Common myeloid progenitor, CD34-positive (primary cell): ENCODE measurements at regions of chr6 and their contacts with region 1.

Region 1: DNA sequence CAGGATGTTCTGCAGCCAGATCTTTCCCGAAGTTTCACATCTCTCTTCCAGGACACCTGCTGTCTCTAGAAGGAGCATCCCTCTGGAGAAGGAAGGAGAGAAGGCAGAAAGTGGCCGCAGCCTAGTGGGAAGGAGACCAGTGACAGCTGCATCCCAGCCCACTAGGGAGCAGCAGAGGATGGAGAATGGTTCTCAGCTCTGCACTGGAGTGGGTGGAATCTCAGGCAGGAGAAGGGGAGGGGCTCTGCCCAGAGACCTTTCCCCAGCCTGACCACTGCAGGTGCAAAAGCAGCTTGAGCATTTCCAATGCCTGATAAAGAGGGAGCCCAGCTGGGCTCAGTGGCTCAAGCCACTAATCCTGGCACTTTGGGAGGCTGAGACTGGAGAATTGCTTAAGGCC is 32.3 kb downstream of the NCR2 start:
- DNase-seq: peak; percentile 48 to 58 (median 56)
- H3K4me3 ChIP-seq: no peak overlapping the region
- H3K27ac ChIP-seq: no peak overlapping the region
- H3K4me1 ChIP-seq: peaks cover 0 to 20% (median 17%) of the 10 kb centered on the region in 4 experiments
- H3K27me3 ChIP-seq: peaks cover 9 to 70% (median 24%) of the 10 kb centered on the region in 5 experiments

Region 2: GRCh38 chr6:41344876-41345275 is 22.8 kb before region 1 on chr6:
- CTCF ChIA-PET with region 1: interaction called, 10 read pairs
- POLR2A ChIA-PET with region 1: no interaction called
- DNase-seq: peak in 2 of 3 donors; percentile 61 to 73
- H3K4me3 ChIP-seq: no peak overlapping the region
- H3K27ac ChIP-seq: no peak overlapping the region
- H3K4me1 ChIP-seq: peaks cover 0 to 13% (median 5%) of the 10 kb centered on the region in 4 experiments
- H3K27me3 ChIP-seq: peaks cover 0 to 3% (median 0%) of the 10 kb centered on the region in 5 experiments

Region 3: DNA sequence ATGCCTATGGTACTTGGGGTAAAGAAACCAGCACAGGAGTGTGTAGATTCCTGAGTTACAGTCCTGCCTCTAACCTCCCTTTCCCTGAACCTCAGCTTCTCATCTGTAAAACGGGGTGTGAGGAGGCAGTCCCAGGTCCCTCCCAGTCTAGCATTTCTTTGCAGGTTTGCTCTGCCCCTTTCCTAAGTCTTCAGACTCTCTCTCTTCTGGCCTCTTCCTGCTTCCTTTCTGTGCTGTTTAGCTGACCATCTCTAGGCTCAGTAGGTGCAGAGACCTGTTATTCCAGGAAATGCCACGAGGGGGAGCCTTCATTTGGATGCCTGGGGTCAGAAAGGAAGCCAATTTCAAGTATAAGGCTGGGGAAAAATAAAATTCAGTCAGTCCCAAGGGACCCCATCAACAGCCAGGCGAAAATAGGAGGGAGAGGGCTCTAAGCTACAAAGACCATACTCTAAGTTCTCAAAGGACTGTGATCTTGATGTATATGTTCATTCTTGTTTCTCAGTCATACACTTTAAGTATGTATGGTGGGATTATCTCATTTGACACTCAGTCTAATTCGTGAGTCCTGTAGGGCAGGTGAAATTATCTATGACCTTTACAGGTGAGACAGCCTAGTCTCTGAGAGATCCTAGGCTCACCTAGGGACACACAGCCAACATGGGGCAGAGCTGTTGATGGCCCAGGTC is 56.8 kb after region 1 on chr6:
- CTCF ChIA-PET with region 1: interaction called, 18 read pairs
- POLR2A ChIA-PET with region 1: no interaction called
- DNase-seq: peak; percentile 61 to 75 (median 65)
- H3K4me3 ChIP-seq: no peak overlapping the region
- H3K27ac ChIP-seq: no peak overlapping the region
- H3K4me1 ChIP-seq: peaks cover 5 to 36% (median 28%) of the 10 kb centered on the region in 4 experiments
- H3K27me3 ChIP-seq: peaks cover 0 to 53% (median 24%) of the 10 kb centered on the region in 5 experiments

Region 4: DNA sequence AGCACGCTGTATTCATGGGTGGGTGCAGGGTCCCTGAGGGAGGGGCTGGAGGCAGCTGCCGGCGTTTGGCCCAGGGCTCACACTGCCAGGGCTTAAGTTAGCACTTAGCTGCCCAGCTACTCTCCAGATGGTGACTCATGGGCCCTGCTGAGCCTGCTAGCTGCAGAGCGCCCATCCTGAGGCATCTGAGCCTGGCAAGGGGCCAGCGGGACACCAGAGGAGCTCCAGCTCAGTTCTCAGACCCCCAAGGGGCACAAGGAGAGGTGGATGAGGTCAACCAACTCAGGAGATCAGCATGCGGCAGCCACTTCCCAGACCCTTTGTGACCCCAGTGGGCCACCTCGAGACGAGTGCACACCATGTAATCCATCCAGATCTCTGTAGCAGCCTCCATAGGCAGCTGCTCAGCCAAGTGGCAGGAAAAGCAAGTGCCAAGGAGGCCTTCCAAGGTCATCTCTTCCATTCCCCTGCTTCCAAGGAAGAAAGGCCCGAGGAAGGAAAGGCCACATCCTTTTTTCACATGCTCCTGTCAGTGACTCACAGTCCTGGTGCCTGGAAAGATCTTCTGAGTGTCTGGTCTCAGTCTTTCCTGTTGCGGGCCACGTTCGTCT is 213.8 kb after region 1 on chr6:
- CTCF ChIA-PET with region 1: interaction called, 10 read pairs
- POLR2A ChIA-PET with region 1: no interaction called
- DNase-seq: no peak
- H3K4me3 ChIP-seq: no peak overlapping the region
- H3K27ac ChIP-seq: no peak overlapping the region
- H3K4me1 ChIP-seq: peaks cover 0 to 8% (median 3%) of the 10 kb centered on the region in 4 experiments
- H3K27me3 ChIP-seq: no peaks in the 10 kb centered on the region

Region 5: GRCh38 chr6:41597246-41598000 is 229.7 kb after region 1 on chr6:
- CTCF ChIA-PET with region 1: interaction called, 18 read pairs
- POLR2A ChIA-PET with region 1: no interaction called
- DNase-seq: no peak
- H3K4me3 ChIP-seq: no peak overlapping the region
- H3K27ac ChIP-seq: no peak overlapping the region
- H3K4me1 ChIP-seq: peaks cover 0 to 2% (median under 1%) of the 10 kb centered on the region in 4 experiments
- H3K27me3 ChIP-seq: no peaks in the 10 kb centered on the region

Region 6: GRCh38 chr6:41683510-41684310 is 316.0 kb after region 1 on chr6:
- CTCF ChIA-PET with region 1: interaction called, 30 read pairs
- POLR2A ChIA-PET with region 1: interaction called, 3 read pairs
- DNase-seq: peak; percentile 78 to 84 (median 82)
- H3K4me3 ChIP-seq: peak overlapping the region in 5 of 7 experiments; percentile 34 to 76 (median 69)
- H3K27ac ChIP-seq: peak overlapping the region; percentile 5 to 15
- H3K4me1 ChIP-seq: peaks cover 0 to 19% (median 17%) of the 10 kb centered on the region in 4 experiments
- H3K27me3 ChIP-seq: no peaks in the 10 kb centered on the region

Region 7: DNA sequence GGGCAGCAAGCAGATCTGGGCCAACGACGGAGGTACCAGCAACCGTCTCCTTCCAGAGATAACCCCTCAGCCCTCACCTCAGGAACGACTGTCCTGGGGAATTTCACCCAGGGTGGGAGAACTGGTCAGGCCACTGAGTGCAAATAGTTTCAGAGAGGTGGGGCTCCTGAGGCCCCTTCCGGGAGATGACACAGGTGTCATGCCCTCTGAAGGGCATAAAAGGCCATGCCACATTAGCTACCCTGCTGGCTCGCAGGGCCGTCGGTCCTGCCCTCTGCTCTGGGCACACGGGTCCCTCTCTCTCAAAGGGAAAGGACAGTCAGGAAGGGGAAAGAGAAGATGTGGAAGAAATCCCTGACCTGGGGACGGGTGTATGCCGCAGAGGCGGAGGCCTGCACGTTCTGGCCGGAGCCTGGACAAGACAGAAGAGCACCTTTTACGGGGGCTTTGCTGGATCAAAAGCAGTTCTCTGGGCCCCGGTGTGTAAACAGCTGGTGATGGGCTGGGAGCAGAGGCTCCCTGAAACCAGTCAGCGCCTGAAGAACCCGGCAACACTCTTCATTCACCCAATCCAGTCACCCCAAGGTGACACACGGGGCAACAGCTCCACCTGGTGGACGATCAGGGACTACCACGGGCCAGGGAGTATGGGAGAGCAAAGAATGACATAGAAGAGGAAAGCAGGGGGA is 676.2 kb after region 1 on chr6:
- CTCF ChIA-PET with region 1: no interaction called
- POLR2A ChIA-PET with region 1: no interaction called
- DNase-seq: peak; percentile 80 to 90 (median 86)
- H3K4me3 ChIP-seq: no peak overlapping the region
- H3K27ac ChIP-seq: no peak overlapping the region
- H3K4me1 ChIP-seq: peaks cover 31 to 87% (median 79%) of the 10 kb centered on the region in 4 experiments
- H3K27me3 ChIP-seq: no peaks in the 10 kb centered on the region